Spleen (tissue), 13 donors: ENCODE measurements at regions of chr15 and their contacts with region 1.

Region 1: DNA sequence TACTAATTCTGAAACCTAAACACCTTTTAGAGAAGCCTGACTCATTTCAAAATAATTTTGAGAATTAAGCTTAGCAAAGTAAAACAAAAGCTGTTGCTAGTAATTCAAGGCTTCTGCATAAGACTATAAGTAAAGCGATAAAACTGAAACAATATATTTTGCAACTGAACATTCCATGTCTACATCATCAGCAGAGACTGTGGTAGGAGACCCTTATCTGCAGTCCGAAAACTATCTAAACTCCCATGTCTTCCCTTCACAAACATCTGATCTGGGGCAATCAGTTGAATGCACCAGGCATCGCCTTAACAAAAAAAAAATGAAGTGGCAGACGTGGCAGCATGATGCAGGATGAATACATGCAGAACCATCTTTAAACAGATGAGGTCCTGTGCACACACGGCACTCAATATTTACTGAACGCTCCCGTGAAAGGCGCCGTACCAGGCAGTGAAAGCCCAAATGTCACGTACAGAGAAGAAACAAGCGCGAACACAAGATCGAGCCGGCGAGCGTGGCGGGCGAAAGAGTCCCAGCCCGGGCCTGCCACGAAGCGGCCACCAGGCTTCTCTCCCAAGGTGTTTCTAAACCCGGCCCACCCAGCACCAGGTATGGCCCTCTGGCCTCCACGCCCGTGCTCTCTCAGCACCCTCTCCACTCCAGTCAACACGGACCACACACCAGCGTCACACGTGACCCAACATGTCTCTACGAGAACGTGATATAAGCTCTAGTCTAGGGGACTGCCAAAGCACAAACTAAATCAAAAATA is 63.0 kb downstream of the CHSY1 start:
- DNase-seq: no peak
- H3K4me3 ChIP-seq: peak overlapping the region in 5 of 8 donors; percentile 2 to 47 (median 15)
- H3K27ac ChIP-seq: peak overlapping the region; percentile 60 to 82 (median 78)
- H3K4me1 ChIP-seq: peaks cover 9 to 100% (median 86%) of the 10 kb centered on the region in 6 donors
- H3K27me3 ChIP-seq: no peaks in the 10 kb centered on the region
- CTCF ChIP-seq: no peak
- POLR2A ChIP-seq: no peak

Region 2: GRCh38 chr15:100863796-100864267 is 325.0 kb before region 1 on chr15:
- intact Hi-C with region 1: no loop called
- DNase-seq: no peak
- H3K4me3 ChIP-seq: no peak overlapping the region
- H3K27ac ChIP-seq: peak overlapping the region in 2 of 8 donors; percentile 21 to 41
- H3K4me1 ChIP-seq: no peaks in the 10 kb centered on the region
- H3K27me3 ChIP-seq: peaks cover 0 to 11% (median 0%) of the 10 kb centered on the region in 7 donors
- CTCF ChIP-seq: no peak
- POLR2A ChIP-seq: no peak

Region 3: GRCh38 chr15:101239724-101240136 is 50.9 kb after region 1 on chr15:
- intact Hi-C with region 1: loop called (anchors 10 kb)
- DNase-seq: no peak
- H3K4me3 ChIP-seq: peak overlapping the region in 1 of 8 donors; percentile 29
- H3K27ac ChIP-seq: peak overlapping the region in 7 of 8 donors; percentile 41 to 88 (median 76)
- H3K4me1 ChIP-seq: peaks cover 55 to 100% (median 79%) of the 10 kb centered on the region in 6 donors
- H3K27me3 ChIP-seq: no peaks in the 10 kb centered on the region
- CTCF ChIP-seq: no peak
- POLR2A ChIP-seq: no peak

Region 4: DNA sequence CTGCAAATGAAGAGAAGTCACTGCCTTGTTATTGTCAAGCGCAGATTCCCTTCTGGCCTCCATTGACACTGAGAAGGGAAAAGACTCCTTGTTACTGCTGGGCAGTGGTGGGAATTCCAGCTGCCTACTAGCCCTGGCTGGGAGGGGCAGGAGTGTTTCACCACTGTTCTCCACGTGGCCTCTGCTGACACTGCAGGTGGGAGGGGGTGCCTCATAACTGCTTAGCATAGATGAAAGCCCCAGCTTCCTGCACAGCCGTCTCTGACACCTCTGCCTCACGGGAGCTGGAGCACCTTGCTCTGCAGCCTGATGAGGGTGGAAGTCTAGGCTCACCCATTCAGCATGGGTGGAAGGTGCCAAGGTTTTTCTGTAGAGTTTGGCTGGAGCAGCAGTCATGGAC is 411.2 kb after region 1 on chr15:
- intact Hi-C with region 1: no loop called
- DNase-seq: no peak
- H3K4me3 ChIP-seq: no peak overlapping the region
- H3K27ac ChIP-seq: no peak overlapping the region
- H3K4me1 ChIP-seq: no peaks in the 10 kb centered on the region
- H3K27me3 ChIP-seq: peaks cover 0 to 41% (median 0%) of the 10 kb centered on the region in 7 donors
- CTCF ChIP-seq: no peak
- POLR2A ChIP-seq: no peak